Activated naive CD4-positive, alpha-beta T cell treated with anti-CD3 and anti-CD28 coated beads for 36 hours (primary cell): ENCODE measurements at regions of chr12 and their contacts with region 1.

Region 1: GRCh38 chr12:90543374-90543773 is 411.6 kb downstream of the CCER1 start:
- DNase-seq: no peak
- H3K4me3 Mint-ChIP-seq: no peak overlapping the region
- H3K27ac Mint-ChIP-seq: no peak overlapping the region
- H3K4me1 Mint-ChIP-seq: no peaks in the 10 kb centered on the region
- H3K27me3 Mint-ChIP-seq: no peaks in the 10 kb centered on the region

Region 2: GRCh38 chr12:90575995-90576394 is 32.6 kb after region 1 on chr12:
- CTCF ChIA-PET with region 1: no interaction called
- intact Hi-C with region 1: loop called (anchors 1 kb)
- DNase-seq: no peak
- H3K4me3 Mint-ChIP-seq: no peak overlapping the region
- H3K27ac Mint-ChIP-seq: no peak overlapping the region
- H3K4me1 Mint-ChIP-seq: no peaks in the 10 kb centered on the region
- H3K27me3 Mint-ChIP-seq: no peaks in the 10 kb centered on the region

Region 3: GRCh38 chr12:90883456-90883855 is 340.1 kb after region 1 on chr12:
- CTCF ChIA-PET with region 1: no interaction called
- intact Hi-C with region 1: no loop called
- DNase-seq: no peak
- H3K4me3 Mint-ChIP-seq: no peak overlapping the region
- H3K27ac Mint-ChIP-seq: no peak overlapping the region
- H3K4me1 Mint-ChIP-seq: no peaks in the 10 kb centered on the region
- H3K27me3 Mint-ChIP-seq: no peaks in the 10 kb centered on the region

Region 4: GRCh38 chr12:91023326-91024004 is 480.1 kb after region 1 on chr12:
- CTCF ChIA-PET with region 1: no interaction called
- intact Hi-C with region 1: no loop called
- DNase-seq: no peak
- H3K4me3 Mint-ChIP-seq: no peak overlapping the region
- H3K27ac Mint-ChIP-seq: no peak overlapping the region
- H3K4me1 Mint-ChIP-seq: no peaks in the 10 kb centered on the region
- H3K27me3 Mint-ChIP-seq: peaks cover 4% of the 10 kb centered on the region